SK-N-SH (cell line): ENCODE measurements at regions of chr10 and their contacts with region 1.

Region 1: GRCh38 chr10:3043512-3044368 is 23.6 kb upstream of the PFKP start:
- DNase-seq: peak; percentile 83
- H3K4me3 ChIP-seq: peak overlapping the region in 1 of 2 experiments; percentile 49; a peak in 1 of 4 replicates
- H3K27ac ChIP-seq: peak overlapping the region in 1 of 2 experiments; percentile 51; a peak in 2 of 4 replicates
- H3K4me1 ChIP-seq: peaks cover 11 to 35% of the 10 kb centered on the region in 2 experiments; a peak in 3 of 4 replicates
- H3K27me3 ChIP-seq: no peaks in the 10 kb centered on the region
- CTCF ChIP-seq: peak; percentile 97
- EP300 ChIP-seq: no peak
- RAD21 ChIP-seq: peak; percentile 95

Region 2: GRCh38 chr10:2938869-2939268 is 104.9 kb before region 1 on chr10:
- CTCF ChIA-PET with region 1: interaction called, 14 read pairs
- POLR2A ChIA-PET with region 1: no interaction called
- DNase-seq: no peak
- H3K4me3 ChIP-seq: no peak overlapping the region
- H3K27ac ChIP-seq: no peak overlapping the region
- H3K4me1 ChIP-seq: peaks cover 4% of the 10 kb centered on the region in 2 experiments; a peak in 1 of 4 replicates
- H3K27me3 ChIP-seq: peaks cover 6% of the 10 kb centered on the region; the same call in 1 of the 2 replicates
- CTCF ChIP-seq: peak; percentile 43
- EP300 ChIP-seq: no peak
- RAD21 ChIP-seq: peak; percentile 43

Region 3: DNA sequence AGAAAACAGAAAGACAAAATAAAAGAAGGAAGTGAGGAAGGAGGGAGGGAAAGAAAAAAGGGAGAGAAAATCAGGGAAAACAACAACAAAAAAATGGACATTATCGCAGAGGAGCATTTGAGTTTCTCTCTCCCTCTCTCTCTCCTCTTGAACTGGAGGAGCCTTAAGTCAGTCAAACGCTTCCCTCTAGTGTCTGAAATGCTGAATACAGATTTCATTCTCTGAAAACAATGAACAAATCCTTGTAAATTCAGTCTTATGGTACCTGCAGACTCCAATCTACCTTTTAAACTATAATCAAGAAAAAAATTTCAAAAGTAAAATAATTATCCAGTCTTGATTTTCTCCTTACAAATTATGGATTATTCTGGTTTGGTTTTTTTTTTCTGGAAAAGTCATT is 65.6 kb before region 1 on chr10:
- CTCF ChIA-PET with region 1: interaction called, 13 read pairs
- POLR2A ChIA-PET with region 1: no interaction called
- DNase-seq: peak; percentile 64
- H3K4me3 ChIP-seq: no peak overlapping the region
- H3K27ac ChIP-seq: no peak overlapping the region
- H3K4me1 ChIP-seq: peaks cover 0 to 13% of the 10 kb centered on the region in 2 experiments; a peak in 1 of 4 replicates
- H3K27me3 ChIP-seq: no peaks in the 10 kb centered on the region
- CTCF ChIP-seq: peak; percentile 73
- EP300 ChIP-seq: no peak
- RAD21 ChIP-seq: peak; percentile 91

Region 4: DNA sequence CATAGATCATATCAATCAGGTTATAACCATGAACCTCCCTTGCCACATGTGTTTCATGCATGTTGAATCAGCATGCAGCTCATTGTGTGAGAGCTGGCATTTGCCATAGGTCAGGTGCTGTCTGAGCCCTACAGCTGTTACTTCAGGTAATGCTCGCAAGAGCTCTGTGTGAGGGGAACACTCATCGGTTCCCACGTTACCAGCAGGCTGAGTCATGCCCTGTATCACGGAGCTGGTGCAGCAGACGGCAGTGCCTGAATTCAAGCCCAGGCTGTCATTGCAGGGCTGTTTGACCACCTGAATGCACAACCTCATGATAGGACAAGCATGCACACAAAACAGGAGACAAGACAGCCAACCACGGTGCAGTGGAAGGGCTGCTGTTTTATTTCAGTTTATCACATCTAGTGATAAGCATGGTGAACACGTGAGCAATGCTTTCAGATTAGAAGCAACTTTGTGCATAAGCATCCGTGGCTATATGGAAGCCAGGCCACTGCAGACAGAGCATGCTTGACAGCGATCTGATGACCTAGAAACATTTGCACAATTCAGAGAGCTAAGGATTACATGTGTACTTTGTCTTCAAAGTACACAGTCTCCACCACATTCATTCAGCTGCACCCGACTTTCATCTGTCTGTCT is 32.8 kb before region 1 on chr10:
- CTCF ChIA-PET with region 1: interaction called, 18 read pairs
- POLR2A ChIA-PET with region 1: no interaction called
- DNase-seq: peak; percentile 65
- H3K4me3 ChIP-seq: no peak overlapping the region
- H3K27ac ChIP-seq: no peak overlapping the region
- H3K4me1 ChIP-seq: peaks cover 0 to 12% of the 10 kb centered on the region in 2 experiments; a peak in 2 of 4 replicates
- H3K27me3 ChIP-seq: 0 out of 2 replicates have a peak, but pooled peaks cover 4% of the 10 kb centered on the region
- CTCF ChIP-seq: no peak
- EP300 ChIP-seq: peak in 1 of 2 experiments; percentile 48; a peak in 1 of 4 replicates
- RAD21 ChIP-seq: no peak

Region 5: DNA sequence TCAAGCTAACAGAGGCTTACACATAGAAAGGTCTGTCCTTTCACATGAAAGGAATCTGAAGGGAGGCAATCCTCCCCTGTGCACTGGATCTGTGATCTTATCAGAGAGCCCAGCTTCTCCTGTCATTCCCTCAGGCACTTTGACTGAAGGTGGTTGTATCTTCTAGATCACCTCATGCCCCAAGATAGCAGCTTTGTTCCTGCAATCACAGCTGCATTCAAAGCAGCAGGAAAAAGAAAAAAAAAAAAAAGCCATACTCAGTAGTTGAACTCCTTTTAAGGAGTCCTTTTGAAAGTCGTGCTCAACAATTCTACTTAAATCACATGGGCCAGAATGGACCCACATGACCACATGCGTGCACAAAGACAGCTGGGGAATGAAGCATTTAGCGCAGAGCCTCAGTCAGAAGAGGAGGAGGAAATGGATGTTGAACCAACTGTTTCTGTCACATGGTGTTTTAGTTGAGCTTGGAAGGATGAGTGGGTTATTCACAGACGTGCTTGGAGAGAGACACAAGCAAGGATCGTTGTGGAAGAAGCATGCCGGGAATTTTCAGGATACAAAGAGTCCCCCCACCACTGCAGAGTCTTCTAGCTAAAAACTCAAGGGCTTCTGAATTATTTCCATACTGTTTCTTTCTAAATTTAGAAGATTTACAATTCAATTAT is 10.6 kb after region 1 on chr10:
- CTCF ChIA-PET with region 1: interaction called, 22 read pairs
- POLR2A ChIA-PET with region 1: no interaction called
- DNase-seq: no peak
- H3K4me3 ChIP-seq: no peak overlapping the region
- H3K27ac ChIP-seq: peak overlapping the region; percentile 3 to 30; a peak in 2 of 4 replicates
- H3K4me1 ChIP-seq: peaks cover 0 to 12% of the 10 kb centered on the region in 2 experiments; a peak in 1 of 4 replicates
- H3K27me3 ChIP-seq: no peaks in the 10 kb centered on the region
- CTCF ChIP-seq: no peak
- EP300 ChIP-seq: no peak
- RAD21 ChIP-seq: no peak